Activated naive CD4-positive, alpha-beta T cell treated with anti-CD3 and anti-CD28 coated beads for 36 hours (primary cell): ENCODE measurements at regions of chr4 and their contacts with region 1.

Region 1: GRCh38 chr4:98851806-98852205 is 77.1 kb downstream of the EIF4E start:
- DNase-seq: no peak
- H3K4me3 Mint-ChIP-seq: no peak overlapping the region
- H3K27ac Mint-ChIP-seq: no peak overlapping the region
- H3K4me1 Mint-ChIP-seq: no peaks in the 10 kb centered on the region
- H3K27me3 Mint-ChIP-seq: peaks cover 12% of the 10 kb centered on the region

Region 2: GRCh38 chr4:98467627-98468072 is 384.2 kb before region 1 on chr4:
- CTCF ChIA-PET with region 1: interaction called, 5 read pairs
- intact Hi-C with region 1: loop called (anchors 1 kb)
- DNase-seq: peak; percentile 85
- H3K4me3 Mint-ChIP-seq: peak overlapping the region; percentile 65
- H3K27ac Mint-ChIP-seq: no peak overlapping the region
- H3K4me1 Mint-ChIP-seq: peaks cover 16% of the 10 kb centered on the region
- H3K27me3 Mint-ChIP-seq: no peaks in the 10 kb centered on the region

Region 3: GRCh38 chr4:98838977-98839618 is 12.7 kb before region 1 on chr4:
- CTCF ChIA-PET with region 1: no interaction called
- intact Hi-C with region 1: no loop called
- DNase-seq: no peak
- H3K4me3 Mint-ChIP-seq: no peak overlapping the region
- H3K27ac Mint-ChIP-seq: no peak overlapping the region
- H3K4me1 Mint-ChIP-seq: no peaks in the 10 kb centered on the region
- H3K27me3 Mint-ChIP-seq: no peaks in the 10 kb centered on the region